WTC11 (cell line): ENCODE measurements at regions of chr2 and their contacts with region 1.

Region 1: DNA sequence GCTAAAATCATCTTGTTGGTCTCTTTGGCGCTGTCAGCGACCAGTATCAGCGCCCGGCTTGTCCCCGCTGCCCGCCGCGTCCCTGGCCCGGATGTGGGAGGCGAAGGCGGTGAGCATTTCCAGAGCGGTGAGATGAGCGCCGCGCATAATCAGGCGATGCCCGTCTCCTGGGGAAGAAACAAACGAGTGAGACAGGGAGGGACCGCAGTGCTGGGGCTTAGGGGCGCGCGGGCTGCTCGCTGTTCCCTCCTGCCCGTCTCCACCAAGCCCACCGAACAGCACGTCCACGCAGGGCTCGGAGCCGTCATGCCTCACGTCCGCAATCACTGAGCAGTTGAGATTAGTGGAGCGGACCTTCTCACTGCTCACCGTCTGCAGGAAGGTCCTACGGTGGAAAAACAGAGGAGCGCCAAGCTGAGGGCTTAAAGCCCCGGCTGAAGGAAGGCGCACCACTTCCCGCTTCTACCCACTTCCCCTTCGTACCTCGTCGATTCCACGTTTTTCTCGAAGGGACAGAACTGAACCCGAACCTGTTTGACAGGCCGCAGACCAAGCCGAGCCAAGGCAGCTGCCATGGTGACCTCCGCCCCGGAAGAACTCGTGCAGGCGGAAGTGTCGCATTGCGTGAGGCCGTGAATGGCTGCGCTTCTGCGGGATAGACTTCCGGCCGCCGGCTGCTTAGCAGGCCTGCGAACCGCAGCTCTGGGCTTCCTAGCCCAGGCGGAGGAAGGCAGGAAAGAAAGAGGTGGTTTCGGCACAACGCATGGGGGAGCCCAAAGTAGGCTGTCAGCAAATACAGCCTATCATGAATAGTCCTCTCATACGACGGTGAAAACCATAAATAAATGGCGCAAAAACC is at the start of gene MRPL53:
- DNase-seq: peak; percentile 94
- ATAC-seq: peak; percentile 88
- H3K4me3 Mint-ChIP-seq: peak within 1 kb of the TSS; percentile 96
- H3K27ac Mint-ChIP-seq: peak within 1 kb of the TSS; percentile 99
- H3K4me1 Mint-ChIP-seq: peaks cover 11% of the 10 kb centered on the region
- H3K27me3 Mint-ChIP-seq: no peaks in the 10 kb centered on the region
- CTCF ChIP-seq: no peak
- total RNA-seq, gene MRPL53: 52.1 to 62.6 TPM (median 55.0 TPM) in 3 replicates

Region 2: DNA sequence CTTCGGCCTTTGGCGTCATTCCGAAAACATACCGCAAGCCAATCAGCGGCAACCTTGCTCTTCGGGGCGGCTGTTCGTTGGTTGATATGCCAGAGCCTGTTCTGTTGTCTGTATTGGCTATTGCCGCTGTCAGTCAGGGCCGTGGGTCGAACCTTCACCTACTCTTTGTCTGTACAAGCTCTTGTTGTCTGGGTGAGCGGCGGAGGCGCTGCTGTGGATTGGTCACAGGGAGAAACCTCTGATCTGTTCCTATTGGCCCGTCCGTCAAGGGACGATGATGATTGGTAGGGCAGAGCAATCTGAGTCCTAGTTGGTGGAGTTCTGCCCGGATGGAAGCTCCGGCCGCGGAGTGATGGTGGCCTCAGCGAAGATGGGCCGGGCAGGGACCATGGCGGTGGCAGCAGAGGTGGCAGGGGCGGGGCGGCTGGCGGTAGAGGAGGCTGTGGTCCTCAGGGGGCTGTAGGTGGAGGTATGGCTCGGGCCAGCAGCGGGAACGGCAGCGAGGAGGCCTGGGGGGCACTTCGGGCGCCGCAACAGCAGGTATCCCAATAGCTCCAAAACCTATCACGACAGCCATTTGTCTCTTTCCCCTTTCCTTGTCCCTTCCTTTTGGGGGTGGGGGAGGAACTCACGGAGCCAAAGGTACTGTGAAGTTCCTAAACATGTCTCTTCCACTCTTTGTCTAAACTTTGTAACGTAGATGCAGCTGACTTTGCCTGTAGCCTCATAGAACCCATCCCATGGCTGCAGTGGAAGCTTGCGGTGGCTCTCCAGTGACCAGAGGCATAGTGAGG is 14.0 kb before region 1 on chr2 and contains the start of gene WBP1:
- CTCF ChIA-PET with region 1: interaction called, 18 read pairs
- POLR2A ChIA-PET with region 1: interaction called, 10 read pairs
- DNase-seq: peak; percentile 100
- ATAC-seq: peak; percentile 89
- H3K4me3 Mint-ChIP-seq: peak within 1 kb of the TSS; percentile 96
- H3K27ac Mint-ChIP-seq: peak within 1 kb of the TSS; percentile 98
- H3K4me1 Mint-ChIP-seq: peaks cover 36% of the 10 kb centered on the region
- H3K27me3 Mint-ChIP-seq: no peaks in the 10 kb centered on the region
- CTCF ChIP-seq: no peak
- total RNA-seq, gene WBP1: 66.0 to 86.6 TPM (median 86.0 TPM) in 3 replicates

Region 3: GRCh38 chr2:74507926-74508520 is 35.7 kb after region 1 on chr2:
- CTCF ChIA-PET with region 1: no interaction called
- POLR2A ChIA-PET with region 1: no interaction called
- DNase-seq: peak; percentile 45
- ATAC-seq: peak; percentile 38
- H3K4me3 Mint-ChIP-seq: peak overlapping the region; percentile 99
- H3K27ac Mint-ChIP-seq: peak overlapping the region; percentile 87
- H3K4me1 Mint-ChIP-seq: peaks cover 28% of the 10 kb centered on the region
- H3K27me3 Mint-ChIP-seq: peaks cover 92% of the 10 kb centered on the region
- CTCF ChIP-seq: no peak